CD4-positive, alpha-beta memory T cell (primary cell): ENCODE measurements at regions of chr14 and their contacts with region 1.

Region 1: GRCh38 chr14:50045039-50045711 is 71.2 kb downstream of the VCPKMT start:
- DNase-seq: peak; percentile 59 to 79 (median 71)
- H3K4me3 ChIP-seq: peak overlapping the region in 1 of 2 donors; percentile 12
- H3K4me3 Mint-ChIP-seq: peak overlapping the region; percentile 28 to 89 (median 66)
- H3K27ac ChIP-seq: peak overlapping the region; percentile 64
- H3K27ac Mint-ChIP-seq: peak overlapping the region; percentile 89 to 97 (median 94)
- H3K4me1 ChIP-seq: peaks cover 75% of the 10 kb centered on the region
- H3K4me1 Mint-ChIP-seq: peaks cover 56 to 85% (median 71%) of the 10 kb centered on the region in 4 donors
- H3K27me3 ChIP-seq: no peaks in the 10 kb centered on the region
- H3K27me3 Mint-ChIP-seq: no peaks in the 10 kb centered on the region

Region 2: GRCh38 chr14:49946320-49947141 is 98.6 kb before region 1 on chr14:
- CTCF ChIA-PET with region 1: no interaction called
- POLR2A ChIA-PET with region 1: interaction called, 11 read pairs
- intact Hi-C with region 1: no loop called
- DNase-seq: peak; percentile 40 to 67 (median 41)
- H3K4me3 ChIP-seq: peak overlapping the region in 1 of 2 donors; percentile 11
- H3K4me3 Mint-ChIP-seq: peak overlapping the region; percentile 1 to 78 (median 67)
- H3K27ac ChIP-seq: peak overlapping the region; percentile 64
- H3K27ac Mint-ChIP-seq: peak overlapping the region; percentile 90 to 97 (median 94)
- H3K4me1 ChIP-seq: peaks cover 69% of the 10 kb centered on the region
- H3K4me1 Mint-ChIP-seq: peaks cover 59 to 91% (median 72%) of the 10 kb centered on the region in 4 donors
- H3K27me3 ChIP-seq: no peaks in the 10 kb centered on the region
- H3K27me3 Mint-ChIP-seq: no peaks in the 10 kb centered on the region

Region 3: DNA sequence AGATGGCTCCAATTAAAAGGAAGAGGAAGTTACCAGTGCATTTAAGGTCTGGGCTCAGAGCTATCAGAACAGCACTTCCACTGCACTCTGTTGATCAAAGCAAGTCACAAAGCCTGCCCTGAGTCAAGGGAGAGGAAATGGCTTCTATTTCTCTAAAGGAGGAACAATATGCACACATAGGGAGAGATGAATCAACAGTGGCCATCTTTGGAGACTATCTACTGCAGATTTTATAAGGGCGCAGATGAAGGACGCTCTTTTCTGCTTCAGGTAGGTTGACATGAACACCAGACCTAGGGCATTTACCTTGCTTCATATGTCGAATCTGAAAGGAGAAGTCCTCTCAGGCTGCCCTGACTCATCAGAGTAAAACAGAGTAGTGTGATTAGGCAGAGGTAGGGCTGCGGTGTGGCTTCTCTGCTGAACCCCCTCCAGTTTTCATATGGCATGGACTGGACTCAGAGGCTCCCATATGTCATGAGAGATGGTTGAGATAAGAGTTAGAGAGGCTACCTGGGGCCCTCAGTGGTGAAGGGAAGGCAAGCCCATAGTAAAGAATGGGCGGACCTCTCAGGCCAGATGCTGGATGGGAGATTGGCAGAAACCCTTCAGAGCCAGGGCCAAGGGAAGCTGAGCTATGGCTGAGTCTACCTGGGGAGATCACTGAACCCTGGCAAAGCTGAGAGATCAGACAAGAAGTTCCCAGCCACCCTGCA is 67.9 kb before region 1 on chr14:
- CTCF ChIA-PET with region 1: interaction called, 4 read pairs
- POLR2A ChIA-PET with region 1: interaction called, 39 read pairs
- intact Hi-C with region 1: no loop called
- DNase-seq: peak; percentile 48 to 66 (median 61)
- H3K4me3 ChIP-seq: peak overlapping the region; percentile 50 to 53
- H3K4me3 Mint-ChIP-seq: peak overlapping the region; percentile 75 to 89 (median 84)
- H3K27ac ChIP-seq: peak overlapping the region; percentile 48
- H3K27ac Mint-ChIP-seq: peak overlapping the region; percentile 91 to 95 (median 93)
- H3K4me1 ChIP-seq: peaks cover 100% of the 10 kb centered on the region
- H3K4me1 Mint-ChIP-seq: peaks cover 60 to 96% (median 87%) of the 10 kb centered on the region in 4 donors
- H3K27me3 ChIP-seq: no peaks in the 10 kb centered on the region
- H3K27me3 Mint-ChIP-seq: no peaks in the 10 kb centered on the region

Region 4: GRCh38 chr14:50055461-50056228 is 10.5 kb after region 1 on chr14:
- CTCF ChIA-PET with region 1: interaction called, 45 read pairs
- POLR2A ChIA-PET with region 1: interaction called, 194 read pairs
- intact Hi-C with region 1: no loop called
- DNase-seq: no peak
- H3K4me3 ChIP-seq: no peak overlapping the region
- H3K4me3 Mint-ChIP-seq: no peak overlapping the region
- H3K27ac ChIP-seq: no peak overlapping the region
- H3K27ac Mint-ChIP-seq: no peak overlapping the region
- H3K4me1 ChIP-seq: peaks cover 32% of the 10 kb centered on the region
- H3K4me1 Mint-ChIP-seq: peaks cover 21 to 45% (median 38%) of the 10 kb centered on the region in 4 donors
- H3K27me3 ChIP-seq: no peaks in the 10 kb centered on the region
- H3K27me3 Mint-ChIP-seq: no peaks in the 10 kb centered on the region

Region 5: DNA sequence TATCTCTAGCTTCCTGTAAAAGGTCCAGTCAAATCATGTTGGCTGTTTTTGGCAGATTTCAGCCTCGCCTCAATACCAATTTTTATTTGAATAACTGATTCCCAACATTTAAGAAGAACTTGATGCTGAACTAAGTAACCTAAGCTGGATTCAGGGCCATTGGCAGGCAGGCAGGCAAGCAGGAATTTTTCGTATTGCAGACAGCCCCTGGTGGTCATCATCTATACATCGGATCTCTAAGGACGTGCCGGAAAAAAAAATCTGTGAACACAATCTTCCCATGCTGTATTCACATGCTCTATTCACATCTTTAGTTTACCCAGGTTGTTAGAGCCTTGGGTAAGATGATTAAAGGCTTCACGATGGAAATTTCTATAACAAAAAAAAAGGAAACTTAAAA is 64.2 kb after region 1 on chr14:
- CTCF ChIA-PET with region 1: interaction called, 8 read pairs
- POLR2A ChIA-PET with region 1: interaction called, 13 read pairs
- intact Hi-C with region 1: loop called (anchors 1 kb)
- DNase-seq: no peak
- H3K4me3 ChIP-seq: no peak overlapping the region
- H3K4me3 Mint-ChIP-seq: no peak overlapping the region
- H3K27ac ChIP-seq: no peak overlapping the region
- H3K27ac Mint-ChIP-seq: peak overlapping the region in 5 of 7 donors; percentile 19 to 56 (median 37)
- H3K4me1 ChIP-seq: peaks cover 15% of the 10 kb centered on the region
- H3K4me1 Mint-ChIP-seq: peaks cover 6 to 25% (median 14%) of the 10 kb centered on the region in 4 donors
- H3K27me3 ChIP-seq: no peaks in the 10 kb centered on the region
- H3K27me3 Mint-ChIP-seq: no peaks in the 10 kb centered on the region